Pancreas (tissue), 10 donors: ENCODE measurements at regions of chr1 and their contacts with region 1.

Region 1: DNA sequence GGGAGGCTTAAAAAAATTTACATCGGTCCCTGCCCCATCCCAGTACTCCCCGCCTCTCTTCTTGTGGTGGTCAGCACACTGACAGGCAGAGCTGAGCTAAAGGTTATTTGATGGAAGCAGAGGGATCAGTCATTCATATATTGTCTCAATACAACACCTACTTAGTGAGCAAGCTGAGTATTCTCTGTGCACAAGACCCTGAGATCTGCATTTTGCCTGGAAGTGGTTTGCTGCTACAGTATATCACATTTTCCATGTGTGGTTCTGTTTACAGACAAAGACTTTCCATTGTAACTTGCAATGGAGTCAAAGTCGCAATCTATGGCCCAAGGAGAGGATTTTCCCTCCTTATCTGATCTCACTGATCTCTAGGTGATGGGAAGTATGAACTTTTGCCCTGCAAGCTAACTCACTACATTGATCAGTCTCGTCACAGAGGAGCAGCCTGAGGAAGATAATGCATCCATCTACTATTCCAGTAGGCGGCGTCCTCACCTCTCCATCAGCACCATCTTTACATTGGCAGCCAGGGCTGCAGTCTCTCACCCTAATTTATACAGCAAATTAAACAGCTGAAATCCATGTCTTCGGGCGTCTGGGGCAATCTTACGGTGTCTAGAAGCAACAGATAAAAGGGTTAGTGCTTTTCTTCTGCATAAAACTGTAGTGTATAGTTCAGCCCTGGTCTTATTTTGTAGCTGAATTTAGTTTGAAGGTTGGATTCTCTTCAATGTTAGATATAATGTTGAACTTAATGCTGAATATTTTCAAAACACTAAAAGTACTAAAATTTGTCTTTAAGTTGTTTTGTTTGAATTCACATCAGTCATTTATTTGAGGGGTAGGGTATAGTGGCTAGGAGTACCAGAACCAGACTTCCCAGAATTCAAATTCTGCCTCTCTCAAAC is 3.2 kb upstream of the TRAF5 start:
- DNase-seq: peak in 1 of 6 donors; percentile 51
- ATAC-seq: peak in 3 of 4 donors; percentile 52 to 69 (median 56)
- H3K4me3 ChIP-seq: no peak overlapping the region
- H3K27ac ChIP-seq: no peak overlapping the region
- H3K4me1 ChIP-seq: peaks cover 0 to 5% (median 0%) of the 10 kb centered on the region in 3 donors
- H3K27me3 ChIP-seq: no peaks in the 10 kb centered on the region
- CTCF ChIP-seq: peak; percentile 27 to 61 (median 44)

Region 2: DNA sequence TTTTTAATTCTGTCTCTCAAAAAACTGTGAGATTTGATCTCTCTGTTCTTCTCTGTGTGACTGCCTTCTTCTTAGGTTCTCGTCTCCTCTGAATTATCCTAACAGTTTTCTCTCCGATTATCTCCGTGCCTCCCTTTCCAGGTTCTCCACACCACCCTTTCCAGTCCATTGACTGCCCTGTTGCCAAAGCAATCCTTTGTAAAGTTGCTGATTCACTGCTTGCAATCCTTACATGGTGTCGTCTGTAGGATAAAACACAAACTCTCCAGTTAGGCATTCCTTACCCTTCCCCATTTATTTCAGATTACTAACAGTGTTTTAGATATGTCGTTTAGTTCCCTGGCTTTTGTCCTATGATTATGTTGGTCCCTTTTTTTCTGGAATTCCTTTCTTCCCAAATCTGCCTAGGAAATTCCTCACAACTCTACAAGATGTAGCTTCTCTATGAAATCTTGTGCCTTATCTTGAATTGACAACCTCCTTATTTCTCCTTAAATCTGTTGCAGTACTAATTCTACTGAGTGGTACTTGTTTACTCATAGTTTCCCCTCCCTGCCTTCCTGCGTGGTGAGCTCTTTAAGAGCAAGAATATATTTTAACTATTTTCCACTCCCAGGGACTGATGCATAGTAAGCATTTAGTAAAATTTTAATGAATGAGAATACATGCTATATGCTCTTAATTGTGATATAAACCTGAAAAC is 41.9 kb before region 1 on chr1:
- intact Hi-C with region 1: no loop called
- DNase-seq: no peak
- ATAC-seq: peak in 1 of 4 donors; percentile 50
- H3K4me3 ChIP-seq: no peak overlapping the region
- H3K27ac ChIP-seq: no peak overlapping the region
- H3K4me1 ChIP-seq: no peaks in the 10 kb centered on the region
- H3K27me3 ChIP-seq: no peaks in the 10 kb centered on the region
- CTCF ChIP-seq: no peak

Region 3: GRCh38 chr1:211476200-211476849 is 152.9 kb after region 1 on chr1:
- intact Hi-C with region 1: loop called in 1 of 3 experiments (anchors 10 kb)
- DNase-seq: peak in 5 of 6 donors; percentile 59 to 79 (median 75)
- ATAC-seq: peak; percentile 60 to 94 (median 86)
- H3K4me3 ChIP-seq: no peak overlapping the region
- H3K27ac ChIP-seq: no peak overlapping the region
- H3K4me1 ChIP-seq: peaks cover 0 to 6% (median 0%) of the 10 kb centered on the region in 3 donors
- H3K27me3 ChIP-seq: no peaks in the 10 kb centered on the region
- CTCF ChIP-seq: peak; percentile 67 to 82 (median 76)